ENCODE measurements at regions of chr5 and their contacts with region 1.

Region 1: DNA sequence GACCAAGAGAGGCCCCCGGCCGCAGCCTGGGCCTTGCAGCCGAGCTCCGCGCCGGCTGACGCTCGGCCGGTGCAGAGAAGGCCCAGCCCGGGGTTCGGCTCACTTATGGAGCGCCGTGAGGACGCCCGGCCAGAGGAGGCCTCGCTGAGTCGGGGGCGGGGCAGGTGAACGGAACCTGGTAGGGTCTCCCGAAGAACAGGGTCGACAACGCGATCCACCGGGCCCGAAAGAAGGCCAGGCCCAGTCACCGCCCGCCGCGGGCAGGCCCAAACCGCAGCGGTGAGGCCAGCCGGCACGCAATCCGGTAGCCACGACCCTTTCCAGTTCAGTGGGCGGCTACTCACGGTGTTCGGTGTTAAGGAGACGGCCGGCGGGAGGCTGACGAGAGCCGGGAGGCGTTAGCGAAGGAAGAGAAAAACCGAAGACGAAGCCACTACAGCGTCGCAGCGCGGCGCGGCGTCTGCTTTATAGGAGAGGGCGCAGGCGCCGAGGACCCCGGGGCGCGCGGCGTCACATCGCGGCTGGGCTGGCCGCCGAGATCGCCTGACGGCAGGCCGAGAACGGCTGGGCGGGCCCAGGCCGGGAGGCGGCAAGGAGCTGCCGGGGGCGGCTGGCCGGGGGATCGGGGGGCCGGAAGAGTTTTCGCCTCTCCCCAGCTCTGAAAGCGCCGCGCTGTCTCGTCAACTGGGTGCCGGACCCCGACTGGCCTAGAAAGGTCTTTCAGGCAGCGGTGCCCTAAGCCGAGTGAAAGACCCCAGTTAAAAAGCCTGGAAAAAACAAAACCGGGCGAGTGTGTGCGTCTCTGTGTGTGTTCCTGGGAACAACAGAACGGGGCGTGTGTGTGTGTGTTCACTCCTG is at the start of gene SKP1:
- DNase-seq: peak; percentile 87
- H3K4me3 Mint-ChIP-seq: peak within 1 kb of the TSS; percentile 80
- H3K27ac Mint-ChIP-seq: peak within 1 kb of the TSS; percentile 97
- H3K4me1 Mint-ChIP-seq: peaks cover 30% of the 10 kb centered on the region
- H3K27me3 Mint-ChIP-seq: peaks cover 6% of the 10 kb centered on the region
- total RNA-seq, gene SKP1: 197 to 205 TPM

Region 2: DNA sequence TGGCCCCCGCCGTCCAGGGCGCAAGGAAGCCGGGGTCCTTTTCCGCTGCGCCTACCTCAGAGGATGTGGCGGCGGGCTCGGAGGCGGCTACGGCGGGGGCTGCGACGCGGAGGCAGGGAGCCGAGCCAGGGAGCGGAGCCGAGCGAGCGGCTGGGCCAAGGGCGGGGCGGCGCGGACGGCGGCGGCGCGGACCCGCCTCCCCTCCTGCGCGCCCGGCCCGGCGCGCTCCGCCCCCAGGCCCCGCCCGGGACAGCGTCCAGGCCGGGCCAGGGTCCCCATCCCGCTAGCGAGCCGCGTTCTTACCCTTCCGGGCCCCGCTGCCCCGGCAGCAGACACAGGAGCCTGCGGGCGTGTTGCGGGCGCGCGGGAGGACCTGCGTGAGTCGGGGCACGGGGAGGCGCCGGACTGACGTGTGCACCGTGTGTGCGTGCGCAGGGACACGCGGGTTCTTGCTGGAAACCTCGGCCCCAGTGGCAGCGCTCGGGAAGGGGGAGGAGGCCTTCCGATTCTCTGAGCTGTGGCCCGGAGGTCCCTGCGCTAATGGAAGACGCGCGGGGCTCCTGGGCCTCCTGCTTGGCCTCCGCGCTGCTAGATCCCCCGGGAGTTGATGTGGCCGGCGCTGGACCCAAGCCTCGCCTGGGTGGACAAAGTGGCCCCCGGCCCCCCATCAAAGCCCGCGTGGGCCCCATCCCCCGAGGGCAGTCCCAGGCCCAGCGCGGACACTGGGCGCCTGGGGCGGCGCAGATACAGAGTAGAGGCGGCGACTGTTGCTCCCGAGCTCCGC is 172.0 kb before region 1 on chr5 and contains the start of gene VDAC1:
- CTCF ChIA-PET with region 1: no interaction called
- POLR2A ChIA-PET with region 1: interaction called, 24 read pairs
- DNase-seq: peak; percentile 87
- H3K4me3 Mint-ChIP-seq: peak within 1 kb of the TSS; percentile 88
- H3K27ac Mint-ChIP-seq: peak within 1 kb of the TSS; percentile 90
- H3K4me1 Mint-ChIP-seq: peaks cover 43% of the 10 kb centered on the region
- H3K27me3 Mint-ChIP-seq: no peaks in the 10 kb centered on the region
- total RNA-seq, gene VDAC1: 216 to 218 TPM

Region 3: GRCh38 chr5:134113902-134114875 is 62.6 kb before region 1 on chr5 and contains the start of gene TCF7:
- CTCF ChIA-PET with region 1: no interaction called
- POLR2A ChIA-PET with region 1: interaction called, 35 read pairs
- DNase-seq: peak; percentile 76
- H3K4me3 Mint-ChIP-seq: peak within 1 kb of the TSS; percentile 78
- H3K27ac Mint-ChIP-seq: no peak within 1 kb of the TSS
- H3K4me1 Mint-ChIP-seq: peaks cover 57% of the 10 kb centered on the region
- H3K27me3 Mint-ChIP-seq: peaks cover 67% of the 10 kb centered on the region
- total RNA-seq, gene TCF7: 19.2 to 21.9 TPM

Region 4: DNA sequence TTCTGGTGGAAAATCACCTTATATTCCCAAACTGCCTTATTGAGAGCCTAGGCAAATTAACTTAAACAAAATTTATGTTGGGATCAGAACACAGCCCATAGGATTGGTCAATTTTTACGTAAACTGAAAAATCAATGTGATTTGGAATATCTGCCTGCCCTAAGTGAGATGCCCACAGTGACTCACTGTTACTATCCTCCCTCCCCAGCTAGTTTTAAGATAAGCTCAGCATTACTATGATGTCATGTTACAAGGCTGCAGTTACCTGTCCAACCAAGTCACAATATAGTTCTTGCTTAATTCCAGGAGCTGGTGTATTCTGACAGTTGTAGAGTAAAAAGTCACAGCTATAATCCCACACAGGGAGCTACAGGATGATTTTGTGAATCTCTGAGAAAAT is 23.1 kb before region 1 on chr5:
- CTCF ChIA-PET with region 1: no interaction called
- POLR2A ChIA-PET with region 1: interaction called, 32 read pairs
- DNase-seq: no peak
- H3K4me3 Mint-ChIP-seq: no peak overlapping the region
- H3K27ac Mint-ChIP-seq: no peak overlapping the region
- H3K4me1 Mint-ChIP-seq: peaks cover 11% of the 10 kb centered on the region
- H3K27me3 Mint-ChIP-seq: no peaks in the 10 kb centered on the region

Region 5: DNA sequence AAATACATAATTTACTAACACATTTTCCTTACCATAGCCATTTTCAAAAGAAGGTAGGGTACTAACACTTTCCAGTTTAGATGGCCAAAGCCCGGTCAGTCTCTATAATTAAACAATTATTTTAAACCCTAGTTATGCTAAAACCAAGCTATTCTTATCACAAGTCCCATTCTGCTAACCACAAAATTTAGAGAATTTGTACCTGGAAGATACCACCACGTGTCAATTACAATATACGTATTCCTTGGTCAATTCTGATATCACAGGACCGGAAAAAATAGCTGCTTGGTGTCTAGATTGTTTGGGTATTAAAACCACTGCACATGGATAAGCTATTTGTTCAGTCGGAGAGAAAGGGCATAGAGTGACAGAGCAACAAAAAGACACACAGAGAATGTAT is 18.9 kb after region 1 on chr5:
- CTCF ChIA-PET with region 1: no interaction called
- POLR2A ChIA-PET with region 1: interaction called, 19 read pairs
- DNase-seq: no peak
- H3K4me3 Mint-ChIP-seq: no peak overlapping the region
- H3K27ac Mint-ChIP-seq: no peak overlapping the region
- H3K4me1 Mint-ChIP-seq: no peaks in the 10 kb centered on the region
- H3K27me3 Mint-ChIP-seq: no peaks in the 10 kb centered on the region

Region 6: DNA sequence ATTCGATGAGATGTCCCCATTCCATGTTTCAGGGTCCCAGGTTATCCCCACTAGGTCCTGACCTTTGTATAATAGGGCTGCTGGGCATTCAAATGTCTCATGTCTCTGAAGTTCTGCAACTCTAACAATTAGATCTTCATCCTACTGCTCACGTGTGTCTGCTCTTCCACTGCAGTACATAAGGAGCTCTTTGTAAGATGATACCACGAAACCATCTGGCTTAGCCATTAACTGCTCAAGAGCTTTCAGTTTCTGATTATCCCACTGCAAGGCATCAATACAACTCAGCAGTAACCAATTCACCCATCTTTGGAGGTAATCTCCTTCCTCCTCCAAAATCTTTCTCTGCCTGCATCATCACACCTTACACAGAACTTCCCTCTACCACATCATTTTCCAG is 99.1 kb after region 1 on chr5:
- CTCF ChIA-PET with region 1: no interaction called
- POLR2A ChIA-PET with region 1: interaction called, 11 read pairs
- DNase-seq: no peak
- H3K4me3 Mint-ChIP-seq: no peak overlapping the region
- H3K27ac Mint-ChIP-seq: no peak overlapping the region
- H3K4me1 Mint-ChIP-seq: peaks cover 8% of the 10 kb centered on the region
- H3K27me3 Mint-ChIP-seq: peaks cover 3% of the 10 kb centered on the region

Region 7: GRCh38 chr5:134758504-134759341 is 582.0 kb after region 1 on chr5 and contains the start of gene DDX46:
- CTCF ChIA-PET with region 1: no interaction called
- POLR2A ChIA-PET with region 1: interaction called, 16 read pairs
- DNase-seq: peak; percentile 95
- H3K4me3 Mint-ChIP-seq: peak within 1 kb of the TSS; percentile 95
- H3K27ac Mint-ChIP-seq: peak within 1 kb of the TSS; percentile 88
- H3K4me1 Mint-ChIP-seq: peaks cover 38% of the 10 kb centered on the region
- H3K27me3 Mint-ChIP-seq: no peaks in the 10 kb centered on the region
- total RNA-seq, gene DDX46: 51.8 to 56.7 TPM

Region 8: GRCh38 chr5:134958765-134959168 is 782.0 kb after region 1 on chr5:
- CTCF ChIA-PET with region 1: no interaction called
- POLR2A ChIA-PET with region 1: no interaction called
- DNase-seq: no peak
- H3K4me3 Mint-ChIP-seq: no peak overlapping the region
- H3K27ac Mint-ChIP-seq: no peak overlapping the region
- H3K4me1 Mint-ChIP-seq: peaks cover 3% of the 10 kb centered on the region
- H3K27me3 Mint-ChIP-seq: no peaks in the 10 kb centered on the region